ENCODE measurements at regions of chr14 and their contacts with region 1.

Region 1: DNA sequence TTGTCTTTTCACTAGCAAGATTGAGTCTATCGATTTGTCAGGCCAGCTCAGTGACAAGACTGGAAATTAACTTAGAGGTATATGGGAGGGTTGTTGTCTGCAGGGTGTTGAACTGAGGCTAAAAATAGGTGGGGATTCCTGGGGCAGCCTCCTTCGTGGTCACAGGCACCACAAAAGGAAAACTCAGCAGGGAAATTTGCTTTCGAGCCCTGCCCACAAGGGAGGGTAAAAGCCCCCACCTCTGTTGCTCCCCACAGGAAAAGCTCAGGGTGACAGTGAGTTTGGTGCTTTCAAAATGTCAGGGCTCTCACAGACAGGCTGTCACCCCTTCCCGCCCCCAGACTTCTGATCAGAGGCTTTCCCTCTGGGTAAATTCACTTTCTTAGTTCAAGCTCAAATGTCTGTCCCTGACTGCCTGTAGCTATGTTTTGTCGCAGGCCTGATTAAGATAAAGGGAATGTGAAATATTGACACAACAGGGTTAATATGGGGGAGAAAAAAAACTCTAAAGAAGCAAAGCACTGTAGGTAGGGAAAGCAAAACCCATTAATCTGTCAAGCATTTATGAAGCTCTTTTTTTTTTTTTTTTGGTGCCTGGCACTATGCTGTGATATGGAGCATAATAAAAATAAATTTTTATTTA is 11.7 kb upstream of the NFKBIA start:
- DNase-seq: peak; percentile 89
- H3K4me3 Mint-ChIP-seq: peak overlapping the region; percentile 59
- H3K27ac Mint-ChIP-seq: peak overlapping the region; percentile 91
- H3K4me1 Mint-ChIP-seq: peaks cover 47% of the 10 kb centered on the region
- H3K27me3 Mint-ChIP-seq: no peaks in the 10 kb centered on the region

Region 2: DNA sequence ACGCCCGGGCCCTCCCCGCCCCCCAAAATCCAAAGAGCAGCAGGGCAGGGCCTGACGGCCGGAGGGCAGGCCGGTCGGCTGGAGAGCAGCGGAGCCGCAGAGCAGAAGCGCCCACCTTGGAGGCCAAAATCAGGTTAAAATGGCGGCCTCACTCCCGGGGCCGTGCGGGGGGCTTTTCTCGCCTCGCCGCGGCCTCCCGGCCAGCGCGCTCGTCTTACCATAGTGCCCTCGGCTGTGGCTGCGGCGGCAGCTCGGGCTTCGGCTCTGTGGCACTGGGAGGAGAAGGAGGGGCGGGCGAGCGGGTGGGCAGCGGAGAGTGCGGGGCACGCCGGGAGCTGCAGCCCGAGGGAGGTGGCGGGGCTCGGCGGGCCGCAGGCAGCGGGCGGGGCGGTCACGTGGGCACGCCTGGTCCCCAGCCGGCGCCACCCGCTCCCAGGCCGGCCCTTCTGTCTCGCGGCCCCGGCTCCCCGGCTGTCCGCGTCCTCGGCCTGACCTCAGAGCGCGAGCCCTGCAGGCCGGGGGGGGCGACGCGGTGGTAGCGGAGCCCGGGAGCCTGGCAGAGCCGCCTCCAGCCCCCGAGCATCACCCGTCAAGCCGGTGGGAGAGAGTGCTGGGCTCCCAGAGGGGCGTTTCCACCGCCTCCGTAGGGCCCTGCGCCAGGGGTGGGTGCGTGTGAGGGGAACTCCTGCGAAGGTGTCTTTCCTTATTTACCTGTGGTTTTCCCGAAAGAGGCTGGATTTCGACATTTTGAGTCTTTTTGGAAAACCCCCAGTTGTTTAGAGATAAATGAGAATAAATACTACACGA is 701.7 kb before region 1 on chr14 and contains the start of gene CFL2:
- CTCF ChIA-PET with region 1: no interaction called
- intact Hi-C with region 1: loop called (anchors 1 kb)
- DNase-seq: peak; percentile 75
- H3K4me3 Mint-ChIP-seq: peak within 1 kb of the TSS; percentile 81
- H3K27ac Mint-ChIP-seq: peak within 1 kb of the TSS; percentile 82
- H3K4me1 Mint-ChIP-seq: peaks cover 18% of the 10 kb centered on the region
- H3K27me3 Mint-ChIP-seq: no peaks in the 10 kb centered on the region
- total RNA-seq, gene CFL2: 3.1 to 4.5 TPM

Region 3: DNA sequence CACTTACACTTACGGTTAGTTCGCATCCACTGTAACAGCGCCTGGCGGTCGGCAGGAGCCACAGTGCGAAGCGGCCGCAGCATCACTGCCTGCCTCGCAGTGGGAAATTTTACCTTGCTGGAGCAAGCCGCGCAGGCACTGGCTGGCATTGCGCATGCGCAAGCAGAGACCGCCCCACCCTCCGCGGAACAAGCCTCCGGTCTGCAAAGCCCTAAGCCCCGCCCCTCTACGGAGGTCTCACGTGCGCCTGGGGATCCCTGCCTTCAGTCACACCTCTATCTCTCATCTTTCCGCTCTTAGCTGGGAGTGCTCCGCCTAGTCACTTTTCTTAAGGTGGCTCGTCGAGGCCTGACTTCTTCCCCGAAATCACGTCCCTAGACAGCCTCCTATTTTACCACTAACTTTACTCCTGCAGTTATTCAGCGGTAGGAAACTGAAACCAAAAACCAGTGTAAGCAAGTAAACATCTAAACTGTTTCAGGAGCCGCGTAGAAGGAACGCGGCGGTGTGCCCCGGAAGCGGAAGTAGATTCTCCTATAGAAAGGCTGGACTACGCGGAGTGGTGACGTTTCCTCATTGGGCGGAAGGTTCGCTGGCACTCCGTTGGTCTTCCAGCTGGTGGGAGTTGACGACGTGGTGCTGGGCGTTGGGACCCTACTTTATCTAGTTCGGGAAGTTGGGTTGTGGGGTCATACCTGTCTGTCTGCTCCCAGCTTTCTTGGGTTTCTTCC is 433.6 kb before region 1 on chr14 and contains the start of gene SRP54:
- CTCF ChIA-PET with region 1: interaction called, 7 read pairs
- intact Hi-C with region 1: loop called (anchors 1 kb)
- DNase-seq: peak; percentile 100
- H3K4me3 Mint-ChIP-seq: no peak within 1 kb of the TSS
- H3K27ac Mint-ChIP-seq: no peak within 1 kb of the TSS
- H3K4me1 Mint-ChIP-seq: peaks cover 38% of the 10 kb centered on the region
- H3K27me3 Mint-ChIP-seq: no peaks in the 10 kb centered on the region
- total RNA-seq, gene SRP54: 66.5 to 72.6 TPM

Region 4: GRCh38 chr14:35223927-35224326 is 192.3 kb before region 1 on chr14:
- CTCF ChIA-PET with region 1: interaction called, 70 read pairs
- intact Hi-C with region 1: no loop called
- DNase-seq: no peak
- H3K4me3 Mint-ChIP-seq: no peak overlapping the region
- H3K27ac Mint-ChIP-seq: no peak overlapping the region
- H3K4me1 Mint-ChIP-seq: peaks cover 26% of the 10 kb centered on the region
- H3K27me3 Mint-ChIP-seq: no peaks in the 10 kb centered on the region

Region 5: DNA sequence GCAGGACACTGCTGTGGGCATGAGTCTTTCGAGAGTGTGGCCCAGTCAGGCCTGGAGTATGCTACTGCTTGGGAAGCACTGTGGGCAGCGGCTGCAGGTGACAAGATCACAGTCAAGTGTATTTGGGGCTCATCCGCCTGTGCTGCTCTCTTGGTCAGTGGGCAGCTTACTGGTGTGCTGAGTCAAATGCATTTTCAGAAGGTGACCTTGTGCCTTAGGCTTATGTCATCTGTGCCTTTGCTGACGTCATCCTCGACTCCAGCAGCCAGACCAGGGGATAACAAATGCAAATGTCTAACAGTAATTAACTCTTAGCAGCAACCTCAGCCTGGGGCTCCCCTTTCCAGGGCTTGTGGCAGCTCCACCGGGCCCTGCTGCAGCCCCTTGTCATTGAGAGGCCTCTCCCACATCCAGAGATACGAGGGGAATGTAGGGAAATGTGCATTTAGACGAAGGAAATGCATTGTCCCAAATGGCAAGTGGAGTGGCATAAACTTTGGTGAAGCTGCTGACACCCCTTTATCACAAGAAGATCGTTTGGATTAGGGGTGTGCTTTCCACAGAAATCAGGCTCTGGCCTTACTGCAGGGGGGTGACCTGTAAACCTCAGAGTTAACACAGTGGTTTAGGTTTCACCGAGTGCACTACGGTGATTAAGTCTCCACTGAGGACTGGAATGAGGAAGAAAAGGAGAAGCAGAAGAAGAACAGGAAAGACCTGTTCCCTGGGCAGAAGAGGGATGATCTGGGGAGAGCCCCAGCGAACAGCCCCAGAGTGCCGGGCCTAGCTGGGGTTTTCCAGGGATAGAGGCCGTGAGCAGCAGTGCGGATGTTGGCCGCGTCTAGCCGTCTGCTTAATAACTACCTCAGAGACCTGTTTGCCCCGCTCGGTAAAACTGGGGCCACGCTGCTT is 84.4 kb before region 1 on chr14:
- CTCF ChIA-PET with region 1: interaction called, 10 read pairs
- intact Hi-C with region 1: loop called (anchors 1 kb)
- DNase-seq: no peak
- H3K4me3 Mint-ChIP-seq: no peak overlapping the region
- H3K27ac Mint-ChIP-seq: peak overlapping the region; percentile 94
- H3K4me1 Mint-ChIP-seq: peaks cover 32% of the 10 kb centered on the region
- H3K27me3 Mint-ChIP-seq: no peaks in the 10 kb centered on the region

Region 6: GRCh38 chr14:35551081-35551480 is 134.9 kb after region 1 on chr14:
- CTCF ChIA-PET with region 1: no interaction called
- intact Hi-C with region 1: no loop called
- DNase-seq: no peak
- H3K4me3 Mint-ChIP-seq: no peak overlapping the region
- H3K27ac Mint-ChIP-seq: no peak overlapping the region
- H3K4me1 Mint-ChIP-seq: no peaks in the 10 kb centered on the region
- H3K27me3 Mint-ChIP-seq: no peaks in the 10 kb centered on the region

Region 7: GRCh38 chr14:35687335-35687939 is 271.2 kb after region 1 on chr14:
- CTCF ChIA-PET with region 1: interaction called, 4 read pairs
- intact Hi-C with region 1: loop called (anchors 1 kb)
- DNase-seq: peak; percentile 63
- H3K4me3 Mint-ChIP-seq: no peak overlapping the region
- H3K27ac Mint-ChIP-seq: no peak overlapping the region
- H3K4me1 Mint-ChIP-seq: peaks cover 16% of the 10 kb centered on the region
- H3K27me3 Mint-ChIP-seq: no peaks in the 10 kb centered on the region

Measured in activated naive CD4-positive, alpha-beta T cell treated with anti-CD3 and anti-CD28 coated beads for 36 hours (primary cell).